ENCODE measurements at regions of chr7 and their contacts with region 1.

Region 1: DNA sequence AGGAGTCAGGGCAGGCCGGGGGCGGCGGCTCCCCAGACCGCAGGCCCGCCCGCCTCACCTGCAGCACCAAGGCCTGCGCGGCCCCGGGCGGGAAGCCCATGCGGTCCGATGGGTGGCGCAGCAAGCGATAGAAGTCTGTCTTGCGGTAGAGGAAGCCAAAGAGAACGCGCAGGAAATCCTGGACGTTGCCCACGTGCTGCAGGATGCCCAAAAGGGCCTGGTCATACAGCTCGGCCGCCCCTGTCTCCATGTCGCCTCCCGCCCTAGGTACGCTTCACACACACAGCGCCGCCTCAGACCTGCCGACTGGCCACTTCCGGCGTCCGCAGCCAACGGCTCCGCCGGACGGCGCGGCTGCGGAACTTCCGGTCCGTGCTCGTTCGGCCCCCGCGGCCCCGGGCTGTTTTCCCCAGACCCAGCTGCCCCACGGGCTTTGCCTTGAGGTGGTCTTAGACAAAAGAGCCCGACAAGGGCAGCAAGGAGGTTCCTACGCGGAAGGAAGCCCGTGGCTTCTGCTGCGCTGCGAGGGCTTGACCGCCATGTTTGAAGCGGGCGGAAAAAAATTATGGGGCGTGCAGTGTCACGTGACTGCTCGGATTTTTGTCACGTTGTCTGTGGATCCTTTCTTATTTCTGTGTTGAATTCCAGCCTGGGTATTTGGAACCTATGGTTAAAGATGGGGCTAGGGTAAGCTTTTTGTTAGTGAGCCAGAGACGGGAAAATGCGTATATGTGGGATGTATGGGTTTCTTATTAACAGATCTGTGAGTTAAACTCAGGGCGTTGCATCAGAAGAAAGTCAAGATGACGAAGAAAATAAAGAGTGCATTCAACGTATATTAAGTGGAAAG is at the start of gene NUDCD3:
- DNase-seq: peak; percentile 63 to 91 (median 82)
- ATAC-seq: peak; percentile 67
- H3K4me3 ChIP-seq: peak within 1 kb of the TSS; percentile 77 to 97
- H3K4me3 Mint-ChIP-seq: peak within 1 kb of the TSS; percentile 88
- H3K27ac ChIP-seq: peak within 1 kb of the TSS; percentile 95 to 100
- H3K27ac Mint-ChIP-seq: peak within 1 kb of the TSS; percentile 97
- H3K4me1 ChIP-seq: peaks cover 42% of the 10 kb centered on the region
- H3K4me1 Mint-ChIP-seq: peaks cover 47% of the 10 kb centered on the region
- H3K27me3 ChIP-seq: no peaks in the 10 kb centered on the region
- H3K27me3 Mint-ChIP-seq: peaks cover 2% of the 10 kb centered on the region
- CTCF ChIP-seq: no peak
- total RNA-seq, gene NUDCD3: 40.6 to 45.9 TPM

Region 2: GRCh38 chr7:43925984-43926797 is 564.4 kb before region 1 on chr7 and contains the start of gene UBE2D4:
- CTCF ChIA-PET with region 1: no interaction called
- POLR2A ChIA-PET with region 1: no interaction called
- intact Hi-C with region 1: loop called in 1 of 2 experiments (anchors 2 kb)
- DNase-seq: peak; percentile 71 to 93 (median 90)
- ATAC-seq: peak; percentile 88
- H3K4me3 ChIP-seq: peak within 1 kb of the TSS; percentile 52 to 64
- H3K4me3 Mint-ChIP-seq: peak within 1 kb of the TSS; percentile 89
- H3K27ac ChIP-seq: peak within 1 kb of the TSS; percentile 91 to 92
- H3K27ac Mint-ChIP-seq: peak within 1 kb of the TSS; percentile 98
- H3K4me1 ChIP-seq: peaks cover 24% of the 10 kb centered on the region
- H3K4me1 Mint-ChIP-seq: peaks cover 41% of the 10 kb centered on the region
- H3K27me3 ChIP-seq: no peaks in the 10 kb centered on the region
- H3K27me3 Mint-ChIP-seq: no peaks in the 10 kb centered on the region
- CTCF ChIP-seq: no peak
- total RNA-seq, gene UBE2D4: 6.8 to 8.4 TPM

Region 3: DNA sequence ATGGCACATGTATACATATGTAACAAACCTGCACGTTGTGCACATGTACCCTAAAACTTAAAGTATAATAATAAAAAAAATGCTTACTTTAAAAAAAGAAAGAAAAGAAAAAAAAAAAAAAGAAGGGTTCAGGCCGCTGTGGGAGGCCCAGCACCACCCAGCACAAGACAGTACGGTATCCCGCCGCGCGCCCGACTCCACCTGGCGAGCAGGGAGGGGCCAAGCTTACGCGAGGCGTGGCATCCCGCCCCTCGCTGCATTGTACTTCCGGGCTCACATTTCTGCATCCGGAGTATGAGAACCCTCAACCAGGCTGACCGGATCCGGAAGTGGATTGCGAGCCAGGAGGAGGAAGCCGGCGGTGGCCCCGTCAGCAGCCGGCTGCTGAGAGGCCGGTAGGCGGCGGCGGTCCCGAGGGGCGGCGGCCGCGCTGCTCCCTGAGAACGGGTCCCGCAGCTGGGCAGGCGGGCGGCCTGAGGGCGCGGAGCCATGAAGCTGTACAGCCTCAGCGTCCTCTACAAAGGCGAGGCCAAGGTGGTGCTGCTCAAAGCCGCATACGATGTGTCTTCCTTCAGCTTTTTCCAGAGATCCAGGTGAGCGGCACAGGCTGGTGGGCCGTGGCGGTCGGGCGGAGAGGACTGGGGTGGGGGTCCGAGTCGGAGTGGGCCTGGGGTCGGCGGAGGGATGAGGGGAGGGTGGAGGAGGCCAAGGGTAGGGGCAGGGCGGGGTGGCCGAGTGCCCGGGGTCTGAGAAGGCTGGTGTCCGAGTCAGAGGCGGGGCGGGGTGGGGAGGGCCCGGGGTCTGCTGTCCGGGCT is 289.7 kb before region 1 on chr7 and contains the start of gene YKT6:
- CTCF ChIA-PET with region 1: no interaction called
- POLR2A ChIA-PET with region 1: interaction called, 8 read pairs
- intact Hi-C with region 1: loop called (anchors 1 to 10 kb)
- DNase-seq: peak; percentile 84 to 98 (median 95)
- ATAC-seq: peak; percentile 98
- H3K4me3 ChIP-seq: peak within 1 kb of the TSS; percentile 72 to 97
- H3K4me3 Mint-ChIP-seq: peak within 1 kb of the TSS; percentile 81
- H3K27ac ChIP-seq: peak within 1 kb of the TSS; percentile 65 to 78
- H3K27ac Mint-ChIP-seq: peak within 1 kb of the TSS; percentile 80
- H3K4me1 ChIP-seq: peaks cover 13% of the 10 kb centered on the region
- H3K4me1 Mint-ChIP-seq: peaks cover 34% of the 10 kb centered on the region
- H3K27me3 ChIP-seq: no peaks in the 10 kb centered on the region
- H3K27me3 Mint-ChIP-seq: peaks cover 5% of the 10 kb centered on the region
- CTCF ChIP-seq: peak; percentile 43
- total RNA-seq, gene YKT6: 111 to 114 TPM

Region 4: DNA sequence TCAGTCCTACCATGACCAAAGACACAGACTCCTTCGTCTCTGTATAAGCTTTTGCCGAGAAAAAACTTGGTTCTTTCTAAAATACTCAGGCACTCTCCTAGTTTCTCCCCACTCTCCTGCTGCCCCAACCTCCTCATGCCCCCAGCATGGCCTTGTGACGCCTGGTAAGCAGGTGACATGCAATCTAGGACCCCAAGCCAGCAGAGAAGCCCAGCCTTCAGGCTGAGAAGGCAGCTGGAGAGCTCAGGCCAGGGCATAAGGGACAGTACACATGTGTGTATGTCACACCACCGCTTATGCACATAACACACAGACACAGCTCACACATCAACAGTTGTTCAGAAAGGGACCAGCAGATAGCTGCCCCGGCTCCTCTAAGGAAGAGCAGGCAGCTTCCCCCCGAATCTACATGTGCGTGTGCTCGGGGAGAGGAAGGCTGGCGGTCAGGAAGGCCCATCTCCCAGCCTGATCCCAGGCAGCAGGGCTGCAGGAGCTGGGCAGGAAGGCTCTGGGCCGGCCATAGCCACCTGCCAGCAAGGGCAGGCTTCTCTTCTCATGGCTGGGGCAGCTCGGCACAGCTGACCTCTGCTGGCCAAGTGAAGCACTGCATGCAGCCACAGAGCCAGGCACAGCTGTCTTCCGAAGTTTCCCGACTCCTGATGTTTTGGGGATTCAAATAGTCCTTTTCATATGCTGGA is 74.7 kb after region 1 on chr7:
- CTCF ChIA-PET with region 1: interaction called, 8 read pairs
- POLR2A ChIA-PET with region 1: interaction called, 3 read pairs
- intact Hi-C with region 1: loop called in 1 of 2 experiments (anchors 2 kb)
- DNase-seq: peak; percentile 40 to 78 (median 65)
- ATAC-seq: peak; percentile 97
- H3K4me3 ChIP-seq: no peak overlapping the region
- H3K4me3 Mint-ChIP-seq: no peak overlapping the region
- H3K27ac ChIP-seq: no peak overlapping the region
- H3K27ac Mint-ChIP-seq: no peak overlapping the region
- H3K4me1 ChIP-seq: no peaks in the 10 kb centered on the region
- H3K4me1 Mint-ChIP-seq: peaks cover 10% of the 10 kb centered on the region
- H3K27me3 ChIP-seq: no peaks in the 10 kb centered on the region
- H3K27me3 Mint-ChIP-seq: no peaks in the 10 kb centered on the region
- CTCF ChIP-seq: peak; percentile 93

Region 5: GRCh38 chr7:44606450-44607254 is 116.1 kb after region 1 on chr7 and contains the start of gene OGDH:
- CTCF ChIA-PET with region 1: no interaction called
- POLR2A ChIA-PET with region 1: interaction called, 10 read pairs
- intact Hi-C with region 1: loop called in 1 of 2 experiments (anchors 1 kb)
- DNase-seq: peak; percentile 98 to 100 (median 99)
- ATAC-seq: peak; percentile 92
- H3K4me3 ChIP-seq: peak within 1 kb of the TSS; percentile 87 to 90
- H3K4me3 Mint-ChIP-seq: peak within 1 kb of the TSS; percentile 99
- H3K27ac ChIP-seq: peak within 1 kb of the TSS; percentile 96 to 98
- H3K27ac Mint-ChIP-seq: peak within 1 kb of the TSS; percentile 100
- H3K4me1 ChIP-seq: peaks cover 30% of the 10 kb centered on the region
- H3K4me1 Mint-ChIP-seq: peaks cover 34% of the 10 kb centered on the region
- H3K27me3 ChIP-seq: no peaks in the 10 kb centered on the region
- H3K27me3 Mint-ChIP-seq: no peaks in the 10 kb centered on the region
- CTCF ChIP-seq: no peak
- total RNA-seq, gene OGDH: 36.8 to 39.6 TPM

Region 6: GRCh38 chr7:44885394-44886317 is 395.1 kb after region 1 on chr7 and contains the start of gene PURB:
- CTCF ChIA-PET with region 1: no interaction called
- POLR2A ChIA-PET with region 1: no interaction called
- intact Hi-C with region 1: loop called (anchors 2 to 10 kb)
- DNase-seq: peak; percentile 94 to 99 (median 97)
- ATAC-seq: peak; percentile 86
- H3K4me3 ChIP-seq: peak within 1 kb of the TSS; percentile 64 to 67
- H3K4me3 Mint-ChIP-seq: peak within 1 kb of the TSS; percentile 92
- H3K27ac ChIP-seq: peak within 1 kb of the TSS; percentile 98 to 100
- H3K27ac Mint-ChIP-seq: peak within 1 kb of the TSS; percentile 99
- H3K4me1 ChIP-seq: peaks cover 36% of the 10 kb centered on the region
- H3K4me1 Mint-ChIP-seq: peaks cover 45% of the 10 kb centered on the region
- H3K27me3 ChIP-seq: no peaks in the 10 kb centered on the region
- H3K27me3 Mint-ChIP-seq: no peaks in the 10 kb centered on the region
- CTCF ChIP-seq: no peak
- total RNA-seq, gene PURB: 16.3 to 16.5 TPM